ENCODE measurements at regions of chr11 and their contacts with region 1.

Region 1: DNA sequence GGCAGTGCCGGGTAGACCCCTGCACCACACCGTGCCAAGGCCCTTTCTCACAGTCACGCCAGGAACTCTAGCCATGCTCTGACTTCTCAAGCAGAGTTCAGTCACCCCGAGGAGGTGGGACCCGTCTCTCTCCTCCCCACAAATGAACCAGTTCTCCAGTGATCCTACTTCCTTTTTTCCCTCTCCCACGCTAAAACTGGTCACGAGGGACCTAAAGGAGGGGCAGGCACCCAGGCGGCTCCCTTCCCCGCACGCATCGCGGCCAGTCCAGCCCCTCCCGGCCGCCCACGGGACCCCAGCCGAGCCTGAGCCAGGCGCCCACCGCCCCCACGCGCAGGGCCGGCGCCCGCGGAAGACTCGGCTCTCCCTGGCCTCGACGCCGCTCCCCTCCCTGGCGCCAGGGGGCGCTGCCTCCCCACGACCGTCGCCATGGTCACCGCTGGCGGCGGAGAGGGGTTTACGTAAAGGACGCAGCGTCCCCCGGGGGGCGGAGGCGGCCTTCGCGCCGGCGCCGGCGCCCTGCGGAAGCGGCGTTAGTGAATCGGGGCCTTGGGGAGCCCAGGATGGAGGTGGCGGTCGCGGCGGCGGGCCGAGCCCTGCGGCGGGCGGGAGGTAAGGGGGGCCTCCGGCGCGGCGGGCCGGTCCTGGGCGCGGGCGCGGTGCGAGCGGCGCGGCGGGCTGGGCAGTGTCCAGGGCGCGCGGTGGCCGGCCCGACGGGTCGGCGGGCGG is at the start of gene DAGLA:
- DNase-seq: peak; percentile 83
- H3K4me3 ChIP-seq: peak within 1 kb of the TSS; percentile 53 to 62
- H3K27ac ChIP-seq: peak within 1 kb of the TSS in 1 of 2 donors; percentile 36
- H3K4me1 ChIP-seq: peaks cover 36% of the 10 kb centered on the region
- H3K27me3 ChIP-seq: no peaks in the 10 kb centered on the region
- CTCF ChIP-seq: peak; percentile 96 to 99 (median 97)
- POLR2A ChIP-seq: no peak
- total RNA-seq, gene DAGLA: 7.1 to 8.3 TPM

Region 2: DNA sequence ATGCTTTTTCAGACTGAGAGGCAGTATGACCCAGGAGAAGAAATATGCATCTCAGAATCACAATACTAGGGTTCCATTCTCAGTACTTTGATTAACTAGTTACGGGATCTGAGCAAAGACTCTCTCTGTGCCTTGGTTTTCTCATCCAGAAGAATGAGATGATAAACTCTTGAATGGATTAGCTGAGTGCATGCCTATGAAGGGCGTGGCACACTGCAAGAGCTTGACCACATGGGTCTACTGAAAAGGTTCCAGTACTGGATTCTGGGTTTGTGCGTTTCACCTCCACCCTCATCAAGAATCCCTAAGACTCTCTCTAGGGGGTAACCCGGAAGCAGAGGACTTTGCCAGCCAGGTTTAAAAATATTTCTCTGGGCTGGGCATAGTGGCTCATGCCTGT is 413.5 kb before region 1 on chr11:
- intact Hi-C with region 1: no loop called
- DNase-seq: no peak
- H3K4me3 ChIP-seq: no peak overlapping the region
- H3K27ac ChIP-seq: no peak overlapping the region
- H3K4me1 ChIP-seq: no peaks in the 10 kb centered on the region
- H3K27me3 ChIP-seq: no peaks in the 10 kb centered on the region
- CTCF ChIP-seq: no peak
- POLR2A ChIP-seq: no peak

Region 3: GRCh38 chr11:61733120-61733978 is 53.3 kb after region 1 on chr11:
- intact Hi-C with region 1: loop called (anchors 5 kb)
- DNase-seq: peak; percentile 94
- H3K4me3 ChIP-seq: no peak overlapping the region
- H3K27ac ChIP-seq: peak overlapping the region; percentile 63 to 75
- H3K4me1 ChIP-seq: peaks cover 36% of the 10 kb centered on the region
- H3K27me3 ChIP-seq: no peaks in the 10 kb centered on the region
- CTCF ChIP-seq: peak; percentile 97 to 99 (median 99)
- POLR2A ChIP-seq: no peak

Region 4: DNA sequence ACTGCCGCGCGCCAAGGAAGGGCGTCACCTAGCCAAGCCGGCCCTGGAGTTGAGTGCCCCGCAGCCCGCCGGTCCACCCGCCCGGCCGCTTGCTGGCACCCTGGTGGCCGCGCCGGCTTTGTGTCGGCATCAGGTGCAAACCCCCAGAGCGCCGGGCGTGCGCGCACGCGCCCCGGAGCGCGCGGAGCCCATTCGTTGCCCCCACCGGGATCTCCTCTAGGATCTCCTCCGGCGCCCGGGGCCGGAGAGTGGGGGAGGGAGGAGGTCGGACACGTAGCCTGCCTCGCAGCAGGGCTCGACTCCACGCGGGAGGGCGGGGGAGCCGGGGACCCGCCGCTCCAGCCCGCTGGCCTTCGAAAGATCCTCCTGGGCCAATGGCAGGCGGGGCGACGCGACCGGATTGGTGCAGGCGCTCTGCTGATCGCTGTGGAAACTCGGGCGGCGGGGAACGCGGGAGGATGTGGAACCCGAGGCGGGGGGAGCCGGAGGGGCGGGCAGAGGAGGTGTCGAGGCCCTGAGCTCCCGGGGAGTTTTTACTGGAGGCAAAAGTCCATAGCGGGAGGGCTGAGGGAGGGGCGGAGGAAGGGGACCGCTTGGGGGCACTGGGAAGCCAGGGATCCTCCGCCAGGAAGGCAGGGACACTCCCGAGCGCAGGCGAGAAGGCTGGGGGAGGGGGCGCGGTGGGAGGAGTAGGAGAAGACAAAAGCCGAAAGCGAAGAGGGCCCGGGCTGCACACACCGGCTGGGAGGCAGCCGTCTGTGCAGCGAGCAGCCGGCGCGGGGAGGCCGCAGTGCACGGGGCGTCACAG is 147.7 kb after region 1 on chr11 and contains the start of gene FADS2:
- intact Hi-C with region 1: no loop called
- DNase-seq: peak; percentile 96
- H3K4me3 ChIP-seq: peak within 1 kb of the TSS; percentile 62 to 72
- H3K27ac ChIP-seq: peak within 1 kb of the TSS; percentile 81 to 91
- H3K4me1 ChIP-seq: peaks cover 41% of the 10 kb centered on the region
- H3K27me3 ChIP-seq: no peaks in the 10 kb centered on the region
- CTCF ChIP-seq: peak in 1 of 3 experiments; percentile 7
- POLR2A ChIP-seq: no peak
- total RNA-seq, gene FADS2: 73.5 to 123 TPM

Region 5: DNA sequence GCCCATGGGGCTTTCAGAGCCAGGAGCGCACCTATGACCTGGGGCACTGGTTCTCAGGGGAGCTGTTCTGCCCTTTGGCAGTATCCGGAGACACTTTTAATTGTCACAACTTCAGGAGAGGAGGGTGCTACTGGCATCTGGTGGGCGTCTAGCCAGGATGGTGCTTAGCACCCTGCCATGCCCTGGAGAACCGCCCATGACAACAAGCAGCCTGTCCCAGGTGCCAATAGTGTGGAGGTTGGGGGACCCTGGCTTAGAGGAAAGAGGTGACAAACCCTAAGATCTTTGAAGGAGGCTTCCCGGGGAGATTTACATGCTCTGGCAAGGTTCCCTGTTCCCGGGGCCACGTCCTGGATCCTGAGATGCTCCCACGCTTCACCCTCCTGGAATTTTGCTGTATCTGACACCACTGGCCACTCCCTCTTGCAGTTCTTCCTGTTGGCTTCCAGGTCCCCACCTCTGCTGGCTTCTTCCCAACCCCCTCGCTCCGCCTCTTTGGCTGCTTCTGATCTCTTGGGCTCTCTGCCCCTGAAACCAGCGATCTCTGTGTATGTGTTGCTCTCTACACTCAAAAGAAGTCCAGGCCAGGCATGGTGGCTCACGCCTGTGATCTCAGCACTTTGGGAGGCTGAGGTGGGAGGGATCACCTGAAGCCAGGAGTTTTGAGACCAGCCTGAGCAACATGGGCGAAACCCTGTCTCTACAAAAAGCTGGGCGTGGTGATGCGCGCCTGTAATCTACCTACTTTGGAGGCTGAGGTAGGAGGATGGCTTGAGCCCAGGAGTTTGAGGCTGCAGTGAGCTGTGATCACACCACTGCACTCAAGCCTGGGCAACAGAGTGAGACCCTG is 180.2 kb after region 1 on chr11:
- intact Hi-C with region 1: no loop called
- DNase-seq: peak; percentile 92
- H3K4me3 ChIP-seq: no peak overlapping the region
- H3K27ac ChIP-seq: no peak overlapping the region
- H3K4me1 ChIP-seq: peaks cover 17% of the 10 kb centered on the region
- H3K27me3 ChIP-seq: no peaks in the 10 kb centered on the region
- CTCF ChIP-seq: no peak
- POLR2A ChIP-seq: no peak

Region 6: DNA sequence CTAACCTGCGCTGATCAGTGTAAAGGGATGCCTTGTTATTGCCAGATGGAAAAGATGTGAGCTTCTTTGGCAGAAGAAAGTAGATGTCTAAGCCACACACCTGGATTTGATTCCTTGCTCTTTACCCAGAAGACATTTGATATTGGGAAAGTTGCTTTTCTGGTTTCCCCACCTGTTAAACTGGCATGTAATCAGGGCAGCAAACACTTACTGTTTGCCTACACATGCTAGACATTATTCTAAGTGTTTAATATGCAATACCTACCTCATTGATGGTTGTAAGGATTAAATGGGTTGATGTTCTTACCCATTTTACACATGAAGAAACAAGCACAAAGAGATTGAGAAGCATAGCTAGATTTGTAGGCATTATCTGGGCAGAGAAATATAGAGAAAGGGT is 673.8 kb after region 1 on chr11:
- intact Hi-C with region 1: no loop called
- DNase-seq: no peak
- H3K4me3 ChIP-seq: no peak overlapping the region
- H3K27ac ChIP-seq: no peak overlapping the region
- H3K4me1 ChIP-seq: no peaks in the 10 kb centered on the region
- H3K27me3 ChIP-seq: no peaks in the 10 kb centered on the region
- CTCF ChIP-seq: no peak
- POLR2A ChIP-seq: no peak